Naive thymus-derived CD4-positive, alpha-beta T cell (primary cell): ENCODE measurements at regions of chr1 and their contacts with region 1.

Region 1: GRCh38 chr1:244854865-244855578 is 9.3 kb downstream of the HNRNPU start:
- DNase-seq: peak in 1 of 9 donors; percentile 17
- ATAC-seq: peak; percentile 24
- H3K4me3 ChIP-seq: no peak overlapping the region
- H3K4me3 Mint-ChIP-seq: peak overlapping the region; percentile 65 to 82 (median 76)
- H3K27ac ChIP-seq: peak overlapping the region; percentile 42
- H3K27ac Mint-ChIP-seq: peak overlapping the region; percentile 44 to 99 (median 87)
- H3K4me1 ChIP-seq: peaks cover 67 to 71% of the 10 kb centered on the region in 2 donors
- H3K4me1 Mint-ChIP-seq: peaks cover 54 to 100% (median 96%) of the 10 kb centered on the region in 7 donors
- H3K27me3 ChIP-seq: no peaks in the 10 kb centered on the region
- H3K27me3 Mint-ChIP-seq: no peaks in the 10 kb centered on the region

Region 2: DNA sequence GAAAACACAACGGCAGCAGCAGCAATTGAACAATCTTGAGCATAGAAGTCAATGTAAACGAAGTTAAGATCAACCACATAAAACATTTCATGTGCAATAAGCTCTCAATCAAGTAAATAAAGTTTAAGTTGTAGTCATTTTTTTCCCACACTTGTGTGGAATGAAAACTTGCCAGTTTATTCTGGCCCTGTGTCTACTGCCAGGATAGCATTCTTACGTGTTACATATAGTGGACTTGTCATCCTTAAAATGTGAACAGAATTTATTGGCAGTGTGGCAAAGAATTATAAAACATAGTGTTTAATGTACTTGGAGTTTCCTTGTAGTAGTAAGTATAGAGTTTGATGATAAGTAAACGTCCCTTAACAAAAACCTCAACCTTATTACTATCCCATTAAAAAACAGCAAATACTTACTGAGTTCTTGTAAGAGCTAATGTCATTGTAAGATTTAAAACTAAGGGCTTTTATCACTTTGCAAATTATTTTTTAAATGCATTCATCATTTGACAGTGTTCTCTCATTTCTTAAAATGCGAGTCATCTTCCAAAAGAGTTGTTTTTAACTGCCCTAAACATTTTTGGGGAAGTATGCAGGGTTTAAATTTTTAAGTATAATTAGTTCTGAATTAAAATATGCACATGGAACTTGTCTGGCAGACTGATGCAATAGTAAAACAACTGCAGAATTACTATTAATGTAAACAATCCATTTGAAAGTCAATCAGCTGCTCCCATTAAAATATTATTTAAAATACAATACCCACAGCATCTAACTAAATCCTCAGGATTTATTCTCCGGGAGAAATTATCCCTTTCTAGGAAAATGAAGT is 11.7 kb before region 1 on chr1:
- CTCF ChIA-PET with region 1: interaction called, 83 read pairs
- POLR2A ChIA-PET with region 1: interaction called, 1,419 read pairs
- intact Hi-C with region 1: loop called (anchors 1 kb)
- DNase-seq: no peak
- ATAC-seq: no peak
- H3K4me3 ChIP-seq: no peak overlapping the region
- H3K4me3 Mint-ChIP-seq: no peak overlapping the region
- H3K27ac ChIP-seq: no peak overlapping the region
- H3K27ac Mint-ChIP-seq: peak overlapping the region in 5 of 9 donors; percentile 36 to 76 (median 61)
- H3K4me1 ChIP-seq: peaks cover 6 to 10% of the 10 kb centered on the region in 2 donors
- H3K4me1 Mint-ChIP-seq: peaks cover 22 to 91% (median 62%) of the 10 kb centered on the region in 7 donors
- H3K27me3 ChIP-seq: no peaks in the 10 kb centered on the region
- H3K27me3 Mint-ChIP-seq: no peaks in the 10 kb centered on the region